ENCODE measurements at regions of chr12 and their contacts with region 1.

Region 1: GRCh38 chr12:26701604-26702215 is 131.3 kb downstream of the ITPR2 start:
- DNase-seq: no peak
- ATAC-seq: peak; percentile 46
- H3K4me3 Mint-ChIP-seq: no peak overlapping the region
- H3K27ac Mint-ChIP-seq: no peak overlapping the region
- H3K4me1 Mint-ChIP-seq: peaks cover 30% of the 10 kb centered on the region
- H3K27me3 Mint-ChIP-seq: no peaks in the 10 kb centered on the region
- CTCF ChIP-seq: peak; percentile 42

Region 2: GRCh38 chr12:26555139-26555538 is 146.6 kb before region 1 on chr12:
- CTCF ChIA-PET with region 1: no interaction called
- POLR2A ChIA-PET with region 1: no interaction called
- DNase-seq: no peak
- ATAC-seq: no peak
- H3K4me3 Mint-ChIP-seq: no peak overlapping the region
- H3K27ac Mint-ChIP-seq: peak overlapping the region; percentile 35; the same call in 1 of the 2 replicates
- H3K4me1 Mint-ChIP-seq: 0 out of 2 replicates have a peak, but pooled peaks cover 3% of the 10 kb centered on the region
- H3K27me3 Mint-ChIP-seq: no peaks in the 10 kb centered on the region
- CTCF ChIP-seq: no peak

Region 3: DNA sequence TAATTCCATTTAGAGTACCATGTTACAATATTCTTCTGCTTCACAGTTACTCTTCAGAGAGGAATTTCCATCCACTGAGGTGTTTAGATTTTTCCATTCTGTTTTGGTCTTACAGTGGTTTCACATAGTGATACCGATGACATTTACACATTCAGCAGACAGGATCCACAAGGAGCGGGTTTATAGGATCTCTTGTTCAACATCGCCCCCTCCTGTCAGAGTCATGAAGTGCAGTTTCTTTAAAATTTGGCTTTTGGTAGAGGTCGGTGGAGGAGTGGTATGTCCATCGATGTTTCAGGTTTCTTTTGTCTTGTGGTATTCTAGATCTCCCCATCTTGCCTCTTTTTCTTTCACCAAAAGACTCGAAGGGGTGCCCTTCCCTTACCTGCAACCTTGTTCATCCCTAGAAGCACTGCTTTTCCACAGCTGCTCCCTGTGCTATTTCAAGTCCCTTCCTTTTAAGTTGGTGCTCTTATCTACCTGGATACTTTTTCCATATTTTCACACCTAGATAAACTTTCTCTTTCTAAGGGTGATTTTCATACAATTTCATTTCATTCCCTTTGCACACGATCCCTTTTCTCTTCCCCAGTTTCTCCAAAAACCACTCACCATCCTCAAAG is 50.0 kb before region 1 on chr12:
- CTCF ChIA-PET with region 1: interaction called, 18 read pairs
- POLR2A ChIA-PET with region 1: interaction called, 5 read pairs
- DNase-seq: peak; percentile 75
- ATAC-seq: peak; percentile 94
- H3K4me3 Mint-ChIP-seq: no peak overlapping the region
- H3K27ac Mint-ChIP-seq: peak overlapping the region; percentile 61
- H3K4me1 Mint-ChIP-seq: peaks cover 22% of the 10 kb centered on the region
- H3K27me3 Mint-ChIP-seq: no peaks in the 10 kb centered on the region
- CTCF ChIP-seq: peak; percentile 83

Region 4: GRCh38 chr12:26691234-26691970 is 10.3 kb before region 1 on chr12:
- CTCF ChIA-PET with region 1: interaction called, 32 read pairs
- POLR2A ChIA-PET with region 1: no interaction called
- DNase-seq: peak; percentile 40
- ATAC-seq: peak; percentile 90
- H3K4me3 Mint-ChIP-seq: no peak overlapping the region
- H3K27ac Mint-ChIP-seq: peak overlapping the region; percentile 95
- H3K4me1 Mint-ChIP-seq: peaks cover 44% of the 10 kb centered on the region
- H3K27me3 Mint-ChIP-seq: no peaks in the 10 kb centered on the region
- CTCF ChIP-seq: no peak

Region 5: DNA sequence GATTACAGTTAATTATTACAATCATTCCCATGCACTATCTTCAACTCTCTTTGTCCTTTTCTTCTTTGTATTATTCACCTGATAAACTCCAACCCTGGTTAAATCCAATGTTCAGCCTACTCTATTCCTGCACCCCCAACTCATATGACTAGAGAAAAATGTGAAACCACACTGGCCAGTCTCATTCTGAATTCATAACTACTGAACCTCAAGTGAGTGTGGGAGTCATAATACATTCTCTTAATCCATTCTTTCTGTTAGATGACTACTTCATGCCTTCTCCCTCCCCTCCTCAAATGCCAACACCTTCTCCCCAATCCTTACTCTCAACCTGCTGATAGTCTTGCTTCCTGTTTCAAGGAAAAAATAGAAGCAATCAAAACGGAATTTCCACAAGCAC is 153.6 kb after region 1 on chr12:
- CTCF ChIA-PET with region 1: no interaction called
- POLR2A ChIA-PET with region 1: no interaction called
- DNase-seq: no peak
- ATAC-seq: no peak
- H3K4me3 Mint-ChIP-seq: no peak overlapping the region
- H3K27ac Mint-ChIP-seq: no peak overlapping the region
- H3K4me1 Mint-ChIP-seq: peaks cover 2% of the 10 kb centered on the region; the same call in 1 of the 2 replicates
- H3K27me3 Mint-ChIP-seq: no peaks in the 10 kb centered on the region
- CTCF ChIP-seq: no peak

Region 6: GRCh38 chr12:26918309-26919215 is 216.9 kb after region 1 on chr12:
- CTCF ChIA-PET with region 1: no interaction called
- POLR2A ChIA-PET with region 1: no interaction called
- DNase-seq: no peak
- ATAC-seq: no peak
- H3K4me3 Mint-ChIP-seq: no peak overlapping the region
- H3K27ac Mint-ChIP-seq: peak overlapping the region; percentile 5; the same call in 1 of the 2 replicates
- H3K4me1 Mint-ChIP-seq: no peaks in the 10 kb centered on the region
- H3K27me3 Mint-ChIP-seq: no peaks in the 10 kb centered on the region
- CTCF ChIP-seq: no peak

Measured in WTC11 (cell line).